ENCODE measurements at regions of chr5 and their contacts with region 1.

Region 1: DNA sequence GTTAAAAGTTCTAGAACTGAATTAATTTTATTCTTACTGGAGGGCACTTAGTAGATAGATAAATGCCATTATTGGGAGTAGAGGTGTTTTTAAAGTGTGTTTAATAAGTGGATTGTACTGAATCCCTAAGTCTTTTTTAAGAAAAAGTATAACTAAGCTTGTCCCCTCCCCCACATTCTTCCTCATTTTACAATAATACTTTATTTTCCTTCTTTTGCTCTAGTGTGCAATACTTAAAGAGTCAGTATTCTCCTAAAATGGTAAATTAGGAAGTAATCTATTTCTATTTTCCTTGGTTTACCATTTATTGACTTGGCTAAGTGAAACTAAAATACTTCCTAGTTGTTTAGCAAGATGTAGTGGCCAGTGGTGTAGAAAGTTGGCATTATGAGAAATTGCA is 11.6 kb downstream of the UBLCP1 start:
- DNase-seq: no peak
- H3K4me3 ChIP-seq: no peak overlapping the region
- H3K27ac ChIP-seq: no peak overlapping the region
- H3K4me1 ChIP-seq: no peaks in the 10 kb centered on the region
- CTCF ChIP-seq: no peak

Region 2: DNA sequence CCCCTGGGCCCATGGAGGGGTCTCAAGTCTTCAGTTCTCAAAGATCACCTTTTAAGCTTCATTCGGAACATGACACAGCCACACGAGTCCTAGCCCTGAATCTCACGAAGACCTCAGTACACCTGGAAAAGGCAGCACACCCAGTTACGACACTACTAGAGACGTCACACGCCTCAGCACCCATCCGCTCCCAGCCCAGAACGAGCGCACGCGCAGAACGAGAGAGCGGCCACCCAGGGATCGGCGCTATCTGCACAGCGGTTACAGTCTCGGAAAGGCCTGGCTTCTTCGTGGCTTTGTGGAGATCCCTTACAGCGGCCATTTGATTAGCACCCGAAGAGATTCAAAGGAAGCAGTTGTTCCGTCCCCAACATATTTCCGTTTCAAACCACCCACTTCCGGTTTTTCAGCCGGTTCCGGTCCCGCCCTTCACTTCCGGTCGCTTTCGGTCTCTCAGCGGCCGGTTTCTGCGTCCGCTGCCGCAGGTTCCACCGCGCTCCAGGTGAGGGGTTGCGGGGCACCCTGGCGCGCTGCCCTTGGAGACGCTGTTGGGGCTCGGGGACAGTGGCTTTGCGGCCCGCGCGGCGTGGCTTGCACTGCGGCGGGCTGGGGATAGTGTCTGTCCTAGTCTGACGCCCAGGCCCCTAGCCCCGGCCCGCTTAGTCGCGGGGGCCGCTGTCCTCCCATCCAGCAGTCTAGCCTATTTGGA is 11.7 kb before region 1 on chr5 and contains the start of gene UBLCP1:
- CTCF ChIA-PET with region 1: no interaction called
- POLR2A ChIA-PET with region 1: interaction called, 11 read pairs
- intact Hi-C with region 1: no loop called
- DNase-seq: peak; percentile 92
- H3K4me3 ChIP-seq: peak within 1 kb of the TSS; percentile 97
- H3K27ac ChIP-seq: peak within 1 kb of the TSS; percentile 72
- H3K4me1 ChIP-seq: peaks cover 17% of the 10 kb centered on the region
- CTCF ChIP-seq: no peak
- total RNA-seq, gene UBLCP1: 7.7 and 11.3 TPM in 2 replicates

Measured in OCI-LY7 (cell line).